ENCODE measurements at regions of chr11 and their contacts with region 1.

Region 1: DNA sequence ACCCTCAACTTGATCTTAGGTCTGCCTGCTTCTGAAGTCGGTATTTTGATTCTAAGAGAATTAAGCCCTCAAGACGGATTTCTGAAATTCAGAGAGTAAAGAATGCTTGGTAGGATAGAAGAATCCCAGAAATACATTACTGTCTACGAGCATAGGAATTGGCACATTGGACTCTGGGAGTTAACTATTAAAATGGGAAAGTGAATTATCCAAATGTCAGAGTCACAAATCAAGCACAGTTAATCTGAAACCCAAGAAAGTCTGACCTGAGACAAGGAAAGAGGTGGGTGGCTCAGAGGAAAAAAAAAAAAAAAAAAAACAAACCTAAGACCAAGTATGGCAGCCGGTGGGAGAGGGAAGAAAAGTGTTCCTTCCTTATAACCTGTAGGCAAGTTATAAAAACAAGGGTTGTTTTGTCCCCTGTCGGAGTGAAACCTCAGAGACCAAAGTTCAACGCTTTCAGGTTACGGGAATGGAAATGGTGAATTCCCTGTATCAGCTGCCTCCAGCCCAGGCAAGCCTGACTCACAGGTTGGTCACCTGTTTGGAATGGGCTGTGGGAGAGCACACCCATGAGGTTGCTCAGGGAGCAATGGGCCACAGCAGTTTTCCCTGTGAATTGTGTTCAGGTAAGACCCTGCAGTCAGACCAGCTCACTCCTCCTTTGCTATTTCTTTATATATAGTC is 139.0 kb downstream of the ETS1 start:
- DNase-seq: peak in 1 of 5 donors; percentile 7
- H3K4me3 ChIP-seq: no peak overlapping the region
- H3K4me3 Mint-ChIP-seq: no peak overlapping the region
- H3K27ac ChIP-seq: no peak overlapping the region
- H3K27ac Mint-ChIP-seq: peak overlapping the region in 4 of 7 donors; percentile 24 to 38 (median 28)
- H3K4me1 ChIP-seq: peaks cover 17% of the 10 kb centered on the region
- H3K4me1 Mint-ChIP-seq: peaks cover 25 to 40% (median 38%) of the 10 kb centered on the region in 4 donors
- H3K27me3 ChIP-seq: no peaks in the 10 kb centered on the region
- H3K27me3 Mint-ChIP-seq: no peaks in the 10 kb centered on the region

Region 2: DNA sequence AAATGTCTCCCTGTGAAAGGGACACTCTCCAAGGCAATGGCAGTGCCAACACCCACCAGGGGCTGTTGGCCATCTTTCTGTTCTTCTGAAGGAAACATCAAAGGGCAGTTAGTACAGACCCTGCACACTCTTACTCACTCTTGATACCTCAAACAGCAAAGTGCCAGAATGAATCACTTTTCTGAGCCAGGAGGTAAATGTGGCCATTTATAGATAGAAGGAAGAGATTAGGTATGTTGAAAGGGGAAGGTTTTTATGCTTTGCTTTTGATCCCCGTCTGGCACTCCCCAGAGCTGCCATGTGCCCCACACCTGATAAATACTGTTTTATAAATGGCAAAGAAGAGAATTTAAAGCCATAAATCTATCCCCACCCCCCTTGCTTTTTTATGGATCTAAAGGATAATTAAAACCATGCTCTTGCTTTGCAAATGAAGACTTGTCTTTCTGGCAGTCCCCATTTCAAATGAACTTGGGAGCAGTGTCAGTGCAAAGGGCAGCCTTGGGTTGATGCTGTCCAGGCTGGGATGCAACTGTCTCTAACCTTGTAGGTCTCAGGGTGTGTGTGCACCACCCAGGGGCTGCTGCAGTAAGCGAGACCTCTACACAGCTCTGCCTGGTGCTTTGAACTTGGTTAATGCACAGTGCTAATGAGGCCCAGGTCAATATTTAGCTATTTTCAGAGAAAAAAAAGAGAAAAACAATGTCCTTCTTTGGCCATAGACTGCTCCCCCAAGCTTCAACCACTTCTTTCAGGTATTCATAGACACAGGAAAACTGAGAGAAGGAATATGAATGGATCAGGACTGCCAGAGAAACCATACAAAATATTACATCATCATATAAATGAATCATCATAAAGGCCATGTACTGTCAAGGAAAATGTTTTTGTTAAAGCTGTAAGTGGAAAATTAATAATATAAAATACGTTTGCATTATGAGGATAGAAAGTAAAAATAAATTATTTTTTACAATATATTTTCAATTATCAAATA is 68.5 kb before region 1 on chr11:
- CTCF ChIA-PET with region 1: no interaction called
- POLR2A ChIA-PET with region 1: no interaction called
- intact Hi-C with region 1: no loop called
- DNase-seq: peak; percentile 34 to 70 (median 37)
- H3K4me3 ChIP-seq: no peak overlapping the region
- H3K4me3 Mint-ChIP-seq: peak overlapping the region in 5 of 8 donors; percentile 12 to 67 (median 42)
- H3K27ac ChIP-seq: no peak overlapping the region
- H3K27ac Mint-ChIP-seq: peak overlapping the region; percentile 65 to 90 (median 88)
- H3K4me1 ChIP-seq: peaks cover 32% of the 10 kb centered on the region
- H3K4me1 Mint-ChIP-seq: peaks cover 31 to 50% (median 35%) of the 10 kb centered on the region in 4 donors
- H3K27me3 ChIP-seq: no peaks in the 10 kb centered on the region
- H3K27me3 Mint-ChIP-seq: no peaks in the 10 kb centered on the region

Region 3: DNA sequence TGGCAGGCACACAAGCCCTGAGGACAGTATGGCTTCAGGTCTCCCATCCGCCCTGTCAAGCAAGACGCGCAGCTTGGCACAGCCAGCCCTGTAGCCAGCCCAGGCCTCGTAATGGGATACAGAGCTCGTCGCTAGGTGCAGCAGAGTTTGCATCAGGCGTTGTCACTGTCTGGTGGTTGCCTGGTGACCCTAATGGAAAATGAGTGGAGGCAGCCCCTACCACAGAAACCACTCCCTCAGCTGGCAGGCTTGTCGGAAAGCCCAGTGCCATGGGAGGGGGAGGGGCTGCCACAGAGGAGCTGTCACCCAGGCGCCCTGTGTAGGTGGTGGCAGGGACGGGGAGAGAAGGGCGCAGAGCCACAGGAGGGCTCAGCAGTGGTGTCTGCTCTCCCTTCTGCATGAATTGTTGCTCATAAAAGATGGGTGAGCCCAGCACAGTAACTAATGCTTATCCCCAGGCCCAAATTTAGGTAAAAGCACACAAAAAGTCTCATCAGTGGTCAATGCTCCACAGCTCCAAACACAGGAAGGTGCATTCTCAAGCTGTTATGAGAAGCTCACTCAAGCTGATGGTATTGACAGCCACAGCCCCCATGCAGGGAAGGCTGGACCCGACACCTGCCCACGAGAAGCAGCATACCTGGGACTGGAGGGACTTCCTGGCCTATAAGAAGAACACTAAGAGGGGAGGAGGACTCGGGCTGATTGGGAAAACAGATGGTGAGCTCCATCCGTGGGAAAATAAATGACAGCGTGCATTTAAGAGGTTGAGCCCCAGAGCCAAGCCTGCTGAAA is 25.6 kb before region 1 on chr11:
- CTCF ChIA-PET with region 1: no interaction called
- POLR2A ChIA-PET with region 1: interaction called, 5 read pairs
- intact Hi-C with region 1: loop called (anchors 2 kb)
- DNase-seq: peak; percentile 84 to 95 (median 90)
- H3K4me3 ChIP-seq: peak overlapping the region in 1 of 2 donors; percentile 28
- H3K4me3 Mint-ChIP-seq: peak overlapping the region; percentile 48 to 81 (median 72)
- H3K27ac ChIP-seq: peak overlapping the region; percentile 50
- H3K27ac Mint-ChIP-seq: peak overlapping the region; percentile 97 to 100 (median 98)
- H3K4me1 ChIP-seq: peaks cover 26% of the 10 kb centered on the region
- H3K4me1 Mint-ChIP-seq: peaks cover 31 to 45% (median 40%) of the 10 kb centered on the region in 4 donors
- H3K27me3 ChIP-seq: no peaks in the 10 kb centered on the region
- H3K27me3 Mint-ChIP-seq: no peaks in the 10 kb centered on the region

Region 4: GRCh38 chr11:128776424-128777284 is 328.3 kb after region 1 on chr11:
- CTCF ChIA-PET with region 1: no interaction called
- POLR2A ChIA-PET with region 1: no interaction called
- intact Hi-C with region 1: no loop called
- DNase-seq: peak; percentile 43 to 61 (median 56)
- H3K4me3 ChIP-seq: no peak overlapping the region
- H3K4me3 Mint-ChIP-seq: peak overlapping the region in 4 of 8 donors; percentile 21 to 63 (median 36)
- H3K27ac ChIP-seq: no peak overlapping the region
- H3K27ac Mint-ChIP-seq: peak overlapping the region; percentile 62 to 91 (median 81)
- H3K4me1 ChIP-seq: peaks cover 62% of the 10 kb centered on the region
- H3K4me1 Mint-ChIP-seq: peaks cover 56 to 93% (median 72%) of the 10 kb centered on the region in 4 donors
- H3K27me3 ChIP-seq: no peaks in the 10 kb centered on the region
- H3K27me3 Mint-ChIP-seq: no peaks in the 10 kb centered on the region